Calu3 (cell line): ENCODE measurements at regions of chr12 and their contacts with region 1.

Region 1: GRCh38 chr12:14514154-14514842 is 53.4 kb downstream of the PLBD1 start:
- DNase-seq: peak; percentile 72
- H3K4me3 Mint-ChIP-seq: no peak overlapping the region
- H3K27ac Mint-ChIP-seq: peak overlapping the region; percentile 63
- H3K4me1 Mint-ChIP-seq: peaks cover 24% of the 10 kb centered on the region
- H3K27me3 Mint-ChIP-seq: no peaks in the 10 kb centered on the region
- CTCF ChIP-seq: peak; percentile 64

Region 2: DNA sequence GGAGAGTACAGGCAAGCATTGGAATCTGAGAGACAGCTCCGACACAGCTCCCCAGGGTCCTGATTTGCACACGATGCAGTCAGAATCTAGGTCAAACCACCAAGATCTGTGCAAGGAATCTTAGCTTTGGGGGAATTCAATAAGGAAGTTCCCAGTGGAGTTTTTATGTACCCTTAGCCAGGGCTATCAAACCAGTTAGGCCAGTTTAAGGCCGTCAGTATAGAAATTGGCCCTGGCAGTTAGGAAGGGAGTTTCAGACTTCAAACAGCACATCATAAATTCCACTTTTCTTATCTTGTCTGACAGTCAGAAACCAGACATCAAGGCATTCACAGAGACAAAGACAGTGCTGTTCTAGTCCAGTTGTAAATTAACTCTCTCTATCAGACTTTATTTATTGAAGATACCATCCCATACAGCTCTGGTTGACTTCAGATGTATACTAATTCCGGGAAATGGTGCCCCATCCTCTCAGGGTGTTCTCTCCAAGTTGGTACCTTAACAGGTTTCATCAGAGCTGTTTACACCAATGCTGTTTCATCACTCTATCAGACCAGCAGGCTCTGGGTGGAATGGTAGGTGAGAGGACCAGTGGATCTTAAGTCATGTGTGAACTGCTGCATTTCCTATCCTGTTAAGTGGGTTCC is 306.3 kb before region 1 on chr12:
- CTCF ChIA-PET with region 1: interaction called, 14 read pairs
- intact Hi-C with region 1: no loop called
- DNase-seq: peak; percentile 68
- H3K4me3 Mint-ChIP-seq: no peak overlapping the region
- H3K27ac Mint-ChIP-seq: peak overlapping the region; percentile 80
- H3K4me1 Mint-ChIP-seq: peaks cover 23% of the 10 kb centered on the region
- H3K27me3 Mint-ChIP-seq: no peaks in the 10 kb centered on the region
- CTCF ChIP-seq: no peak

Region 3: DNA sequence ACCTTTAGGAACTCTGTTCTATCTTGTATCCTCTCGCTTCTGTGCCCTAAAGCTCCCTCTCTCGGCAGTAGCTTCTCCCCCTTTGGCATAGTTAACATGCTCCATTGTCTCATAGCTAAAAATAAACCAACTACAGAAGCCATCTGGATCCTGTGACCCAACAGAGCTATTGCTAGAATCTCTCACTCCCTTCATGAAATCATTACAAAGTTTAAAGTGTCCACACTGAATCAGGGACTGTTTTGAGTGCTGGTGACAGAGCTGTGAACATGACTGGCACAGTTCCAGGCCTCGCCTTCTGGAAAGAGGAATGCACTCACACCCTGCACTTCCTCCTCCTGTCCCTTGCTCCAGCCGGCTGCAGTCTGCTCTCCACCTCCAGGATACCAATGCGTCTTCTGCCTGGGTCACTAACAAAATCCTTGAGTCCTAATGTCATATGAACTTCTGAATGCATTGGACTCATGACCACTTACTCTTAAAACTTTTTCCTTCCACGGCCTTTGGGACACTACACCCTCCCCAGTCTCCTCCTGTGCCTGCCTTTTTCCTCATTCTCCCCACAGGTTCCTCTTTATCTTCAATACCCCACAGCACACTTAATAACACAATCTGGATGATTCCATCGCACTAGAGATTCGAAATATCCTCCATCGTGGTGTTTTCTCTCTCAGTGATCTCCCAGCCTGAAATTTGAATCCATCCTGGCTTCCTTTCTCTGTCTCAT is 40.1 kb after region 1 on chr12:
- CTCF ChIA-PET with region 1: interaction called, 6 read pairs
- intact Hi-C with region 1: loop called (anchors 2 kb)
- DNase-seq: peak; percentile 86
- H3K4me3 Mint-ChIP-seq: no peak overlapping the region
- H3K27ac Mint-ChIP-seq: no peak overlapping the region
- H3K4me1 Mint-ChIP-seq: peaks cover 14% of the 10 kb centered on the region
- H3K27me3 Mint-ChIP-seq: no peaks in the 10 kb centered on the region
- CTCF ChIP-seq: no peak

Region 4: DNA sequence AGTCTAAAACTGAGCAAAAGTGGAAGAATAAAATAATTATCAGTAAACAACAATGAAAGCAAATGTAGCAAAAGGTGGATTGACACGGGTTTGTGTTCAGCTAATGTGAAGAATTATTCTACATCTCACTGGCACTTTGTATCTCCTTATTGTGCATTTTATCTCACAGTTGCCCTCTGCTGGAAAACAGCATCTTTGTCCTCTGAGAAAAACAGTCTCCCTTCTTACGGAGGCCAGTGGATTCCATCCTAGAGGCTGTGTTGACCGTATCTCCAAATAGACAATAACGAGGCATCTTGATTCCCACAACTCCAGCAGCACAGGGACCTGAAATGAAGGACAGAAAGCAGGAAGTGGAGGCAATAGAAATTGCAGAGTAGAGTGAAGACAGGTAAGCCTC is 104.7 kb after region 1 on chr12:
- CTCF ChIA-PET with region 1: interaction called, 12 read pairs
- intact Hi-C with region 1: loop called (anchors 1 kb)
- DNase-seq: peak; percentile 25
- H3K4me3 Mint-ChIP-seq: peak overlapping the region; percentile 24
- H3K27ac Mint-ChIP-seq: peak overlapping the region; percentile 35
- H3K4me1 Mint-ChIP-seq: peaks cover 27% of the 10 kb centered on the region
- H3K27me3 Mint-ChIP-seq: no peaks in the 10 kb centered on the region
- CTCF ChIP-seq: no peak

Region 5: DNA sequence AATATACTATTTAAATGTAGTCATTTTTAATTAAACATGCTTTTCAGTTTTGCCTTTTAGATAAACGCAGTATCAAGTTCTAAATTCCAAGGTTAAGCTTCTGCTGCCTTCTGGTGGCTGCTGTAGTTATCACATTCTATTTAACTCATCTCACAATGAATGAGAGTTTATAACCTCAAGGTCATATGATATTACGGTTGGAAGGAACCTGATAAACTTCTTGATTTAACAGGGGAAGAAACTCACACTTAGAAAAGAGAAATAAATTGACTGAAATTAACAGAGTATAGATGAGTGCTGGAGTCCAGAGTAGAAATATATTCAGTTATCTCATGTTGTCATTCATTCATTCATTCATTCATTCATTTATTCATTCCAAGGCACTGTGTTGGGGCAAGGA is 150.2 kb after region 1 on chr12:
- CTCF ChIA-PET with region 1: interaction called, 11 read pairs
- intact Hi-C with region 1: loop called (anchors 1 kb)
- DNase-seq: peak; percentile 37
- H3K4me3 Mint-ChIP-seq: no peak overlapping the region
- H3K27ac Mint-ChIP-seq: no peak overlapping the region
- H3K4me1 Mint-ChIP-seq: no peaks in the 10 kb centered on the region
- H3K27me3 Mint-ChIP-seq: no peaks in the 10 kb centered on the region
- CTCF ChIP-seq: no peak